ENCODE measurements at regions of chr14 and their contacts with region 1.

Region 1: DNA sequence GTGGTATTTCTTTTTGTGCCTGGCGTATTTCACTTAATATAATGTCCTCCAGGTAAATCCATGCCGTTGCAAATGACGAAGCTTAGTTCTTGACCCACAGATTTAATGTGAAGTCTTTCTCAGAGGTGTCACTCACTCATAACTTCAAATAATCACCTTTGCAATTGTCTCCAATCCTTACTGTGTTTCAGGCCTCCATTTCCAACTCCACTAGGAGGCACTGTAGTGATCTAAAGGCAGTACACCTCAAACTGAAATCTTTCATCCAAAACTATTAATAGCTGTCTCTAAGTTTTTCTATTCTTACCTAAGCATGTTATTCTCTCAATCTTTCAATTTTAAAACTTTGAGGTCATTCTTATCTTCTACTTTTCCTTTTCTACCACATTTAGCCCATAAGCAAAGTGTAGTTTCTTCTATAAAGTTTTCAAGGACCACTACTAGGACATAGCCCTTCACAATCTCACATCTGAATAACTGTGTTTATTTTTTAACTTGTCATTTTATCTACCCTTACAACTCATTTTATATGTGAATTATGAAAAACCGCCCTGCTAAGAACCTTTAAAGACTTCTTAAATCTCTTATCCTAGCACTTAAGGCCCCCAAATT is 25.5 kb upstream of the FBXO34 start:
- DNase-seq: no peak
- H3K4me3 ChIP-seq: no peak overlapping the region
- H3K27ac ChIP-seq: no peak overlapping the region
- H3K4me1 ChIP-seq: peaks cover 0 to under 1% (median under 1%) of the 10 kb centered on the region in 4 experiments; a peak in 2 of 7 replicates
- H3K27me3 ChIP-seq: peaks cover 0 to 5% (median 1%) of the 10 kb centered on the region in 4 experiments; a peak in 4 of 7 replicates
- CTCF ChIP-seq: peak in 2 of 3 experiments; percentile 39 to 61; a peak in 2 of 4 replicates
- EP300 ChIP-seq: no peak
- POLR2A ChIP-seq: no peak
- RAD21 ChIP-seq: peak; percentile 42 to 56

Region 2: GRCh38 chr14:55212634-55213033 is 33.1 kb before region 1 on chr14:
- CTCF ChIA-PET with region 1: interaction called, 17 read pairs
- POLR2A ChIA-PET with region 1: no interaction called
- DNase-seq: no peak
- H3K4me3 ChIP-seq: no peak overlapping the region
- H3K27ac ChIP-seq: peak overlapping the region; percentile 40; the same call in 1 of the 2 replicates
- H3K4me1 ChIP-seq: peaks cover 0 to 3% (median 0%) of the 10 kb centered on the region in 4 experiments; a peak in 1 of 7 replicates
- H3K27me3 ChIP-seq: no peaks in the 10 kb centered on the region
- CTCF ChIP-seq: no peak
- EP300 ChIP-seq: no peak
- POLR2A ChIP-seq: no peak
- RAD21 ChIP-seq: no peak

Region 3: DNA sequence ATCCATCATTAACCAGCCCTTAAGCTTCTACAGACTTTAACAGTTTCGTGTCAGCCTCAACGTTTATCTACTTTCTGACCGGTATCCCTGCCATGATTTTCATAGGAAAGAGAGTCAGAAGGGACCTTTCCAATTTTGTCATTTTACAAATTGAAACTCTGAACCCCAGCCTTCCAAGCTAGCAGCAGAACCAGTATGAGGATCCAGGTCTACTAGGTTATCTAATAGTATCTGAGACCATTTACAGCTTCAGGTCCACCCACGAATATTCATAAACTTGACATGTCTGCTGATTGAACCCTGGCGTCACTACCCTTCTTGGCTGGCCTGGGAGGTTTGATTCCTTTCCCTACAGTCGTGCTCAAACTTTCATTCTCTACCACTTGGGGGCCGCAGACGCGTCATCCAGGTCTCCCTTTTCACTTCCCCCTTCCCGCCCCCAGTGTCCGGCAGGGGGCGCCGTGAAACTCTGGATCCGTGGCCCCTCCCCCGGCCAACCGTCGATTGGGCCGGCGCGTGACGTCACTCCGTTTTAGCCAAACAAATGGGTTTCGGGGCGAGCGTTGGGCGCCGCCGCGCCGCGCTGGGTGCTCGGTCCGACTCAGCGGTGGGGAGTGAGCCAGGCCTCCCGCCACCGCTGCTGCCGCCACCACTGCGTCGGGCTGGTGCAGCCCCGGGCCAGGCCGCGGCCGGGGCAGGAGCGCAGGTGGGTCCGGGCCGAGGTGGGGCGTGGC is 25.2 kb after region 1 on chr14 and contains the start of gene FBXO34:
- CTCF ChIA-PET with region 1: interaction called, 11 read pairs
- POLR2A ChIA-PET with region 1: no interaction called
- DNase-seq: peak; percentile 85 to 100
- H3K4me3 ChIP-seq: peak within 1 kb of the TSS; percentile 82 to 100 (median 87)
- H3K27ac ChIP-seq: peak within 1 kb of the TSS; percentile 88; the same call in 1 of the 2 replicates
- H3K4me1 ChIP-seq: peaks cover 0 to 1% (median 0%) of the 10 kb centered on the region in 4 experiments; a peak in 1 of 7 replicates
- H3K27me3 ChIP-seq: peaks cover 0 to 1% (median 0%) of the 10 kb centered on the region in 4 experiments; a peak in 1 of 7 replicates
- CTCF ChIP-seq: peak; percentile 92 to 99 (median 97)
- EP300 ChIP-seq: peak in 1 of 2 experiments; percentile 81; a peak in 1 of 3 replicates
- POLR2A ChIP-seq: peak in 1 of 2 experiments; percentile 82; a peak in 2 of 3 replicates
- RAD21 ChIP-seq: peak; percentile 72 to 74
- total RNA-seq, gene FBXO34: 14.4 and 14.8 TPM in 2 replicates

Measured in H1 (cell line).